Activated CD4-positive, alpha-beta T cell treated with anti-CD3 and anti-CD28 coated beads, Interleukin-2, amount 10 ng/mL, durations not matched to agents 24 days and 14 days (primary cell): ENCODE measurements at regions of chr6 and their contacts with region 1.

Region 1: DNA sequence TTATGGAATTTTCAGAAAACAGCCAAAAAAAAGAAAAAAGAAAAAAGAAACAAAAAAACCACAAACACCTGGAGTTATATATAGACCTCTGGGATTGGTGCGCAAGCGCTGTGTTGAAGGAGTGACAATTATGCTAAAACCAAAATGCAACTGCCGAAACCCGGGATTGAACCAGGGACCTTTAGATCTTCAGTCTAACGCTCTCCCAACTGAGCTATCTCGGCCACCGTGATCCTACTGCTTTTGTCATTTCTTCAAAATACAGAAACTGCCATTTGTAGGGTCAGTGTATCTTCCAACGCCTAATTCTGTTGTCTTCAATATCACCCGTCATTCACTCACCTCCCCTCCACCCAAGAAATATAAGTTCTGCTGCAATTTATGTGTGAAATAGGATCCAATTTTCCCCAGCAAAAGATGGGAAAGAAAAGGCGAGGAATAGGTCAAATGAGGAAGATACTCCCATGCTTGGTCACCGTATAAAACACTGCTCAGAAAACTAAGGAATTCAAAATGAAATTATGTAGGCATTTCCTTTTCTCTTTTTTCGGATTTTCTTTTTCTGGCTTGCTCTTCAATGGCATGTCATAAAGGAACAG is 116.0 kb downstream of the TRIM27 start:
- DNase-seq: peak; percentile 67
- H3K4me3 Mint-ChIP-seq: no peak overlapping the region
- H3K27ac Mint-ChIP-seq: peak overlapping the region; percentile 10
- H3K4me1 Mint-ChIP-seq: peaks cover 18% of the 10 kb centered on the region
- H3K27me3 Mint-ChIP-seq: peaks cover 74% of the 10 kb centered on the region

Region 2: DNA sequence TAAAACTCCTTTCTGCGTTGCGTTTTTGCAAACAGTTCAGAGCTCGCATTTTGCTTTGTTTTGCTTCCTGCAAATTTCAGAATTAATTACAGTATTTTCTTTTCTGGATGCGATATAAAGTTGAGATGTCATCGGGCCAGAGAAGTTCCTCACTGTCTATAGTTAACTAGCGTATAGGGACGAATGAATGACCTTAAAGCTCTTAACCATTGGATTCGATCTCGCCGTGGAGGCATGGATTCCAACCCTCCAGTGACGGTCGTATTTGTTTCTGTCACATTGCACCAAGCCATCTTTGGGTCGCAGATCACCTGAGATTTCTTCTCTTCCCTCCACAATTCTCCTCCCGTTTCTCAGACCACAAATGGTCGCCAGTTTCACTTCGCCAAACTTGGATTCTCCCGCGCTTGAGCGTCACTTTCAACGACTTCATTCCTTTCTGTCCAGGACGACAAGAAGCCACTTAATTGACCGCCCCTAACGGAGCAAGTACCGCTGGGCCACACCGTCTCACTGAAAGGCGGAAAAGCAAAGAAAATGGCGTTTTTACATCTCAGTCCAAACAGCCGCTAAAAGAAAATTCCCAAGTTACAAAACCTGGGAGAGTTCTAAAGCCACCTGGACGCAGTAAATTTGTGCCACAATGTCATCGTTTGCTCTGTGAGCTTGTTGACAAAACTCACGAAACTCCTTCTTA is 1249.6 kb before region 1 on chr6:
- intact Hi-C with region 1: loop called (anchors 5 kb)
- DNase-seq: no peak
- H3K4me3 Mint-ChIP-seq: peak overlapping the region; percentile 63
- H3K27ac Mint-ChIP-seq: no peak overlapping the region
- H3K4me1 Mint-ChIP-seq: peaks cover 6% of the 10 kb centered on the region
- H3K27me3 Mint-ChIP-seq: peaks cover 70% of the 10 kb centered on the region

Region 3: DNA sequence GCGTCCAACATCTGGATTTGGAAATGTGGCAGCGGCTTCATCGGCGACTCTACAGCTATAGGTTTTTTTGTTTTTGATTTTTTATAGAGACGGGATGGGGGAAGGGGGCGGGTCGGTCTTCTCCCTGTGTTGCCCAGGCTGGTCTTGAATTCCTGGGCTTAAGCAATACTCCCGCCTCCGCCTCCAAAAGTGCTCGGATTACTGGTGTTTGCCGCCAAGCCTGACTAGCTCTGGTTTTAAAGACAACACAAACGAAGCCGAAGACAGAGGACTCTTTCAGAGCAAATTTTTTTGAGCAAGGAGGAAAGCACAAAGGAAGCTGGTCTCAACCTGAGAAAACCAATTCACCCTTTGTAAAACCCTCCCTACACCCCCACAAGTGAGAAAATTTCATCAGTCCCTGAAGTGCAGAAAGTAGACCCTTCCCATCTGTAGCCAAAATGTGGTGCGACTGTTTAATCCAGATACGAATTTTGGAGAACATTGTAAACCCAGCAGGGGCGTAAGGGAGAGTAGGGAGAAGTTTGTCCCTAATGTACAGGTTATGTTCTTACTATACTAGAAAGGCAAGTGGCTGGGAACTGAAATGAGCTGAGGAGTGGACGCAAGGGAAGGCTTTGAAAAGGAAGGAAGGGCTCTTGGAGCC is 69.9 kb before region 1 on chr6:
- intact Hi-C with region 1: loop called (anchors 2 kb)
- DNase-seq: no peak
- H3K4me3 Mint-ChIP-seq: no peak overlapping the region
- H3K27ac Mint-ChIP-seq: no peak overlapping the region
- H3K4me1 Mint-ChIP-seq: peaks cover 5% of the 10 kb centered on the region
- H3K27me3 Mint-ChIP-seq: peaks cover 64% of the 10 kb centered on the region

Region 4: GRCh38 chr6:28769626-28770402 is 38.0 kb before region 1 on chr6:
- intact Hi-C with region 1: loop called (anchors 5 kb)
- DNase-seq: no peak
- H3K4me3 Mint-ChIP-seq: no peak overlapping the region
- H3K27ac Mint-ChIP-seq: no peak overlapping the region
- H3K4me1 Mint-ChIP-seq: peaks cover 5% of the 10 kb centered on the region
- H3K27me3 Mint-ChIP-seq: peaks cover 90% of the 10 kb centered on the region

Region 5: DNA sequence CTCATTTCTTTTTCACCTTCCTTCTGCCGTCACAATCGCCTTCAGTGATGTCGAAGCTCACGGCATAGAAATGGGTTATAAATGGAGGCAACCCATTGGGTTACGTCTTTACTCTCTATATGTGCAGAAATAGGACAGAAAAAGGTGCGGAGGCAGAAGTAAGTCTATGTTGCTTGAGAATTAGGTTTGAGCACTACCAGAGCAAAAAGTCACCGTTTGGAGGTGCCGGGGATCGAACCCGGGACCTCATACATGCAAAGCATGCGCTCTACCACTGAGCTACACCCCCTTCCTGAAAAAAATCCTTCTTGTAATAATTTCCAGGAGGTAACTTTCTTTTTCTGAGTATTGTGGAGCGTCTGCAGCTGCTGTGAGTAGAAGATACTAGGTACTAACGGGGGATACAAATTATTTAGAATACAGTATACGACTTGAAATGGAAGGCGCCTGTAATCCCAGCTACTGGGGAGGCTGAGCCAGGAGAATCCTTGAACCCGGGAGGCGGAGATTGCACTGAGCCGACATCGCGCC is 18.2 kb before region 1 on chr6:
- intact Hi-C with region 1: loop called (anchors 2 kb)
- DNase-seq: peak; percentile 66
- H3K4me3 Mint-ChIP-seq: peak overlapping the region; percentile 81
- H3K27ac Mint-ChIP-seq: peak overlapping the region; percentile 71
- H3K4me1 Mint-ChIP-seq: peaks cover 13% of the 10 kb centered on the region
- H3K27me3 Mint-ChIP-seq: peaks cover 83% of the 10 kb centered on the region